Activated CD8-positive, alpha-beta memory T cell treated with anti-CD3 and anti-CD28 coated beads, Interleukin-2, amount 10 ng/mL, durations not matched to agents 7 days and 5 days (primary cell): ENCODE measurements at regions of chr12 and their contacts with region 1.

Region 1: GRCh38 chr12:126784328-126784921 is 1482.5 kb upstream of the TMEM132C start:
- DNase-seq: peak; percentile 48
- ATAC-seq: no peak
- H3K4me3 Mint-ChIP-seq: no peak overlapping the region
- H3K27ac Mint-ChIP-seq: no peak overlapping the region
- H3K4me1 Mint-ChIP-seq: no peaks in the 10 kb centered on the region
- H3K27me3 Mint-ChIP-seq: no peaks in the 10 kb centered on the region

Region 2: DNA sequence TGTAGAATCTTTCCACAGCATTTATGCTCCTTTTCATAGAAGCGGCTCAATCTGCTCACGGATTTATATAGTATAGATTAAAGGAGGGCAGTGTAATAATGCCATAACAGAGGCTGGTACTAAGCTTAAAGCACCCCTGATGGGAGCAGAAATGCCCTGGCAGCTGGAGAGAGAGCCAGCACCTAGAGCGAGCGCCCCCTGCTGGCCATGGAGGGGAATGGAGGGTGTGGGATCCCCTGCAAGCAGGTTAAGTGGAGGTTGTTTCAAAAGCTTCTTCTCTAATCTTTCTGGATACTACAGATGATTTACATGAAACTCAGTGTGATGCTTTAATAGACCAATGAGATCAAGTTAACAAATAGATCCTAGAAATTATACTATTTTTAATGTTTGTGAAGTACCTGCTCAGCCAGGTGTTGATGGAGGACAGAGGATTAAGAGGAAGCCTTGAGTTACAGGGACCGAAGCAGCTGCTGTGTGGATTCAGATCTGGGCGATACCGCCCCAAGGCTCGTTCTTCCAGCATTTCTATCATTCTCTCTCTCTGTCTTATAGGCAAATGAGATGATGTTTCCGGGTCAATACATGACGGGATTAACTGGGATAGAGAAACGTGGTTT is 36.8 kb before region 1 on chr12:
- CTCF ChIA-PET with region 1: no interaction called
- DNase-seq: peak; percentile 55
- ATAC-seq: peak; percentile 39
- H3K4me3 Mint-ChIP-seq: no peak overlapping the region
- H3K27ac Mint-ChIP-seq: no peak overlapping the region
- H3K4me1 Mint-ChIP-seq: no peaks in the 10 kb centered on the region
- H3K27me3 Mint-ChIP-seq: no peaks in the 10 kb centered on the region

Region 3: GRCh38 chr12:126874427-126875026 is 90.1 kb after region 1 on chr12:
- CTCF ChIA-PET with region 1: interaction called, 14 read pairs
- DNase-seq: peak; percentile 67
- ATAC-seq: peak; percentile 61
- H3K4me3 Mint-ChIP-seq: no peak overlapping the region
- H3K27ac Mint-ChIP-seq: no peak overlapping the region
- H3K4me1 Mint-ChIP-seq: no peaks in the 10 kb centered on the region
- H3K27me3 Mint-ChIP-seq: no peaks in the 10 kb centered on the region

Region 4: DNA sequence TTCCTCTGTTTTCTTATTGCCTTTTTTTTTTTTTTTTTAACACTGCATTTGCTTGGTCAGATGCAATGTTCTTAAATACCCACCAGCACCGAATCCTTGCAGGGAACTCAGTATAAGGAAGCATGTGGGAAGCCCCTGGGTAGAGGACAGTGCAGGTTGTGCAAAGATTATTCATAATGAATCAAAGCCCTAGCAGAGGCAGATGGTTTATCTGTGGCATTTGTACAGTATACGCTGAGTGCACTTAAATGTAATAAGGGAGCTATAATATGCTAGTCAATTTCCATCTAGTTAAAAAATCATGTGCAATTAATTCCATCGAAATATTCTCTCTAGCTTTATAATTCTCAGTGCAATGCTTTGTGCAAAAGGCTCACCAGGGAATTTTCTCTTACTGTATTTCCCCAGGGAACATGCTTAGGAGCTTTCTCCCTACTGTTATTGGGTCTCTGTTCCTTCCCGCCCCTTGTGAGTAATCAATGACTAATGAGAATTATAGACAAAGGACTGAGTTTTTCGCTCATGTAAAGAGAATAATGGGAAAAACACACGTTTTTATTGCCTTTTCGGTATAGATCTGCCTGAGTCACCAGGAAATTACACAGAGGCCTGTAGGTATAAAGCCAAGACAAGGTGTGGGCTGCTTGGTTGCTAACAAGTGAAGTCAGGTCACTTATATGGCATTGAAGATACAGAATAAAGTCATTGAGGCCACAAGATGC is 268.2 kb after region 1 on chr12:
- CTCF ChIA-PET with region 1: no interaction called
- DNase-seq: no peak
- ATAC-seq: no peak
- H3K4me3 Mint-ChIP-seq: no peak overlapping the region
- H3K27ac Mint-ChIP-seq: no peak overlapping the region
- H3K4me1 Mint-ChIP-seq: no peaks in the 10 kb centered on the region
- H3K27me3 Mint-ChIP-seq: no peaks in the 10 kb centered on the region